ENCODE measurements at regions of chr9 and their contacts with region 1.

Region 1: GRCh38 chr9:14466429-14466818 is 152.5 kb upstream of the NFIB start:
- DNase-seq: no peak
- H3K4me3 ChIP-seq: no peak overlapping the region
- H3K27ac ChIP-seq: no peak overlapping the region
- H3K4me1 ChIP-seq: no peaks in the 10 kb centered on the region
- H3K27me3 ChIP-seq: 0 out of 2 replicates have a peak, but pooled peaks cover 2% of the 10 kb centered on the region
- CTCF ChIP-seq: no peak

Region 2: DNA sequence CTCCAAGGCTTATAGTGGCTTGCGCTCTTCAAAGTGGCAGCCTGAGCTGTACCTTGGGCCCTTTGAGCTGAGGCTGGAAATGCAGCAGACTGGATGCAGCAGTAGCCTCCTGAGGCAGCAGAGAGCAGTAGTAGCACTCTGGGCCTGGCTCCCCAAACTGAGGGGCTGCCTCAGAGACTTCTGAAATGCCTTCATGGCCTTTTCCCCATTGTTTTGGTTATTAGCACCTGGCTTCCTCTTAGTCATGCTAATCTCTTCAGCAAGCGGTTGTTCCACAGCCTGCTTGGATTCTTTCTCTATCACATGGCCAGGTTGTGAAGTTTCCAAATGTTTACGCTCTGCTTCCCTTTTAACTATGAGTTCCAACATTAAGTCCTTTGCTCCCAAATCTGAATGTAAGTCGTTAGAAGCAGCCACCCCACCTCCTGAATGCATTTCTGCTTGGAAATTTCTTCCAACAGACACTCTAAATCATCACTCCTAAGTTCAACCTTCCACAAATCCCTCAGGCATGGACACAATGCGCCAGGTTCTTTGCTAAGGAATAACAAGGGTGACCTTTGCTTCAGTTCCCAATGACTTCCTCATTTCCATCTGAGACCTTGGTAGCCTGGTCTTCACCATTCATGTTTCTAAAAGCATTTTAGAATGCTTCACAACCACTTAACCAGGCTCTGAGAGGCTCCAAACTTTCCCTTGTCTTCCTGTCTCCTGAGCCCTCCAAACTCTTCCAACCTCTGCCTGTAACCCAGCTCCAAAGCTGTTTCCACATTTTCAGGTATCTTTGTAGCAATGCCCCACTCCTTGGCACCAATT is 81.0 kb after region 1 on chr9:
- CTCF ChIA-PET with region 1: no interaction called
- POLR2A ChIA-PET with region 1: no interaction called
- intact Hi-C with region 1: no loop called
- DNase-seq: no peak
- H3K4me3 ChIP-seq: no peak overlapping the region
- H3K27ac ChIP-seq: no peak overlapping the region
- H3K4me1 ChIP-seq: no peaks in the 10 kb centered on the region
- H3K27me3 ChIP-seq: no peaks in the 10 kb centered on the region
- CTCF ChIP-seq: no peak

Region 3: GRCh38 chr9:14652729-14653377 is 186.4 kb after region 1 on chr9:
- CTCF ChIA-PET with region 1: no interaction called
- POLR2A ChIA-PET with region 1: no interaction called
- intact Hi-C with region 1: loop called (anchors 10 kb)
- DNase-seq: no peak
- H3K4me3 ChIP-seq: no peak overlapping the region
- H3K27ac ChIP-seq: no peak overlapping the region
- H3K4me1 ChIP-seq: no peaks in the 10 kb centered on the region
- H3K27me3 ChIP-seq: no peaks in the 10 kb centered on the region
- CTCF ChIP-seq: peak; percentile 41; the same call in 1 of the 2 replicates

Region 4: GRCh38 chr9:15010581-15010980 is 544.2 kb after region 1 on chr9:
- CTCF ChIA-PET with region 1: no interaction called
- POLR2A ChIA-PET with region 1: no interaction called
- intact Hi-C with region 1: no loop called
- DNase-seq: no peak
- H3K4me3 ChIP-seq: no peak overlapping the region
- H3K27ac ChIP-seq: no peak overlapping the region
- H3K4me1 ChIP-seq: no peaks in the 10 kb centered on the region
- H3K27me3 ChIP-seq: no peaks in the 10 kb centered on the region
- CTCF ChIP-seq: no peak

Region 5: DNA sequence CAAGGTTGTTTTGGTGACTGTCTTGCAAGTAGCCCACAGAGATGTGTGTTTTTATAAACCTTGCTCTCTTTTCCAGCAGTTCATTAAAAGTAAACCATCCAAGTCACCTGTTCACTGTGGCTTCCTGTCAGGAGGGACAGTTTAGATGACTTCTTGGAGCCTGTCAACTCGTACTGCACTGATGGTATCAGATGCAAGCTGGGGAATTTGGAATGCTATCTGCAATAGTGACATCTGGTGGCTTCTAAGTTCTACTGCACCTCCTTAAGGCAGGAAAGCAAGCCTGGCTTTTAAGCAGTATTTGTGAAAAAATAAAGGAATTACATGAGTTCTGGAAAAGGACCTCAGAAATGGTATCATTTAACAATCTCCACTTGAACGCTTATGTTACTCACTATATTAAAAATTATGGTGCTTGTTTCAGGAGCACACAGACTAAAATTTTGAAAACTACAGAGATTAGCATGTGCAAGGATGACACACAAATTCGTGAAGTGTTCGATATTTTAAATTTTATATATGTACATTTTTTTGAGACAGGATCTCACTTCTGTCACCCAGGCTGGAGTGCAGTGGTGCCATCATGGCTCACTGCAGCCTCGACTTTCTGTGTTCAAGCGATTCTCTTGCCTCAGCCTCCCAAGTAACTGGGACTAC is 676.6 kb after region 1 on chr9:
- CTCF ChIA-PET with region 1: no interaction called
- POLR2A ChIA-PET with region 1: no interaction called
- intact Hi-C with region 1: loop called (anchors 10 kb)
- DNase-seq: peak in 1 of 2 experiments; percentile 46
- H3K4me3 ChIP-seq: no peak overlapping the region
- H3K27ac ChIP-seq: no peak overlapping the region
- H3K4me1 ChIP-seq: peaks cover 16% of the 10 kb centered on the region
- H3K27me3 ChIP-seq: no peaks in the 10 kb centered on the region
- CTCF ChIP-seq: peak; percentile 76